HEK293T (cell line): ENCODE measurements at regions of chr20 and their contacts with region 1.

Region 1: DNA sequence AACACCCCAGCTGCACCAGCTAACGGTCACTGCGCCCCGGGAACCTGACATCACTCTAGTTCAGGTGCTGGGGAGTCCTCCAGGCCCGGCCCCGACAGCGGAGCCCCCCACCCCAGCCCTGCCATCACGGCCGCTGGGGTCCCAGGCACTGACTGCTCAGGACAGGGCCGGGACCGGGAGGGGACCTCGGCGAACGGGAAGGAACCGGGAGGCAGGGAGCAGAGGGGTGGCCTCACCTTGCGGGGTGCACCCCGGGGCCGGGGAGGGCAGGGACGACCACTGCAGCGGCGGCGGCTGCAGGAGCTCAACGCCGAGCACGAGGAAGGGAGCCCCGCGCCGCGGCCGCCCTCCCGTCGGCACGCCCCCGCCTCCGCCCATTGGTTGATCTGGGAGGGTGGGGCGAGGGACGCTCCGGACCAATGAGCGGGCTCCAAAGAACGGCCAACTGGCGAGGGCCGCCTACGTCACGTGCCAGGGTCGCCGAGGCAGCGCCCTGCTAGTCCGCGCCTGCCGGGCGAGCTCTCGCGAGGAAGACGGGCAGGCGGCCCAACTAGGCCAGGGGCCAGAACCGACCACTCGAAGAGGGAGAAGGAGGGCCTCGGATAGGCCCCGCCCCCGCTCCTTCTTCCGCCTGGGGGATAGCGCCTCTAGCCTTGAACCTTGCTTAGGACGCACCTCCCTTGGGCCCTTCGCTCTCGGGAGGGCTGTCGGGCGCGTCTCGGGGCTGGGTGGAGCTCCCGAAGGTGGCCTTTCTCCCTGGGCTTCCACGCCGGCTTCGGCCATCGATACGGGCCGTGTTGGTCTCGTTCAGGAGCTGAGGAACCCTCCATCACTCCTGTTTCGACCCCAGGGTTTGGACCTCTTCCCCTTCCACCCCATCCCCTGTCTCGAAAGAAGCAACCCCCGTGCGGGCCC is at the start of gene ADISSP:
- DNase-seq: peak; percentile 99

Region 2: DNA sequence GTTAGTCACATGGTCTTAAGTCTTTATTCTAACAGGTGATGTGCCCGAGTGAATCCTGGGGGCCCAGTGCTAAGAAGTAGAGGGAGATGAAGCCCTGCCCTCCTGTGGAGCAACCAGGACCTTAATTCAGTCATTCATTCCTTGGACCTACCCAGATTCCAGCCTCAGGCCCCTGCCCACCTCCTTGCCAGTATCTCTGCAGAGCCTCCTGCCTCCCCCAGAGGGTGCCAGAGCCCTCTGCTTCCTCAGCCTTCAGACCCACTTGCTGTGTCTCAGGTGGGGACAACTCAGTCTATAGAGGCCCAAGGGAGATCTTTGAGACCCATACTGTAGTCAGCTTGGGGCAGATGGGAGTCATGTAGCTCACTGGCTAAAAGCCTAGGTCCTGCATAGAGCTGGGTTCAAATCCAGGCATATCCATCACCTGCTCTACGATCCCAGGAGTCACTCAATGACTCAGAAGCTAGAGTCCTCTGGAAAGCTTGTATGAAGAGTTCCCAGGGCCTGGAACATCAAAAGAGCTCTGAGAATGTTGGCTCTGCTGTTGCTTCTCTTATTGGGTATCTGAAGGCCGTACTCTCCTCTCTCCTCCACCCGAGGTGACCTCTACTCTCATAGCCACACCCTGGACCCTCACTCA is 51.4 kb before region 1 on chr20:
- CTCF ChIA-PET with region 1: interaction called, 10 read pairs
- POLR2A ChIA-PET with region 1: interaction called, 4 read pairs
- DNase-seq: peak; percentile 71

Region 3: GRCh38 chr20:3744806-3745685 is 22.6 kb before region 1 on chr20:
- CTCF ChIA-PET with region 1: interaction called, 6 read pairs
- POLR2A ChIA-PET with region 1: interaction called, 41 read pairs
- DNase-seq: peak; percentile 98

Region 4: GRCh38 chr20:3755814-3756480 is 11.7 kb before region 1 on chr20:
- CTCF ChIA-PET with region 1: interaction called, 4 read pairs
- POLR2A ChIA-PET with region 1: interaction called, 13 read pairs
- DNase-seq: no peak

Region 5: GRCh38 chr20:3781153-3781910 is 13.6 kb after region 1 on chr20 and contains the start of gene SPEF1:
- CTCF ChIA-PET with region 1: interaction called, 17 read pairs
- POLR2A ChIA-PET with region 1: interaction called, 11 read pairs
- DNase-seq: peak; percentile 90

Region 6: GRCh38 chr20:3786665-3787323 is 19.1 kb after region 1 on chr20 and contains the start of gene CENPB:
- CTCF ChIA-PET with region 1: interaction called, 17 read pairs
- POLR2A ChIA-PET with region 1: interaction called, 19 read pairs
- DNase-seq: peak; percentile 91

Region 7: GRCh38 chr20:3804254-3804751 is 36.6 kb after region 1 on chr20:
- CTCF ChIA-PET with region 1: no interaction called
- POLR2A ChIA-PET with region 1: no interaction called
- DNase-seq: no peak